ENCODE measurements at regions of chr1 and their contacts with region 1.

Region 1: DNA sequence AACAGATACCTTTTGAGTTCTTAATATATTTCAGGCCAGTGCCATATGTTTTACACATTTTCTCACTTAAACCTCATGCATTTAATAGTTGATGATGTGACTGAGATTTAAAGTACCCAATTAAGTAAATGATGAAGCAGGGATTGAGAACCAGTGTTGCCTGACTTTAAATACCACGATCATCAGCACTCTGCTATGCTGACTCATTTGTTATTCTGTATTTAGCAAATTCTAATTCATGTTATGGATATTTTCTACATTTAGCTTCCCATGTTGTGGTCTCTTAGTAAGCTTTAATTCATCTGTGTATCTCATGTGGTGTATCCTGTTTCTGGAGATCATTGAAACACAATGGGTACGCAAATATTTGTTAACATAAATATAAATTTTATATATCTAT is 363.0 kb downstream of the PTBP2 start:
- DNase-seq: no peak
- ATAC-seq: no peak
- H3K4me3 ChIP-seq: no peak overlapping the region
- H3K4me3 Mint-ChIP-seq: no peak overlapping the region
- H3K27ac ChIP-seq: no peak overlapping the region
- H3K27ac Mint-ChIP-seq: no peak overlapping the region
- H3K4me1 ChIP-seq: no peaks in the 10 kb centered on the region
- H3K4me1 Mint-ChIP-seq: no peaks in the 10 kb centered on the region
- H3K27me3 ChIP-seq: no peaks in the 10 kb centered on the region
- H3K27me3 Mint-ChIP-seq: no peaks in the 10 kb centered on the region

Region 2: GRCh38 chr1:96721416-96722160 is 363.0 kb before region 1 on chr1 and contains the start of gene PTBP2:
- CTCF ChIA-PET with region 1: no interaction called
- POLR2A ChIA-PET with region 1: interaction called in 1 of 2 experiments, 12 read pairs
- DNase-seq: peak; percentile 62 to 90 (median 79)
- ATAC-seq: peak; percentile 90 to 94 (median 94)
- H3K4me3 ChIP-seq: peak within 1 kb of the TSS; percentile 91 to 92
- H3K4me3 Mint-ChIP-seq: peak within 1 kb of the TSS; percentile 85 to 96 (median 92)
- H3K27ac ChIP-seq: peak within 1 kb of the TSS; percentile 88
- H3K27ac Mint-ChIP-seq: peak within 1 kb of the TSS; percentile 86 to 96
- H3K4me1 ChIP-seq: peaks cover 9 to 12% of the 10 kb centered on the region in 2 experiments
- H3K4me1 Mint-ChIP-seq: peaks cover 13 to 28% (median 25%) of the 10 kb centered on the region in 3 donors
- H3K27me3 ChIP-seq: no peaks in the 10 kb centered on the region
- H3K27me3 Mint-ChIP-seq: no peaks in the 10 kb centered on the region
- total RNA-seq, gene PTBP2: 16.8 to 24.0 (median 20.7) TPM

Region 3: DNA sequence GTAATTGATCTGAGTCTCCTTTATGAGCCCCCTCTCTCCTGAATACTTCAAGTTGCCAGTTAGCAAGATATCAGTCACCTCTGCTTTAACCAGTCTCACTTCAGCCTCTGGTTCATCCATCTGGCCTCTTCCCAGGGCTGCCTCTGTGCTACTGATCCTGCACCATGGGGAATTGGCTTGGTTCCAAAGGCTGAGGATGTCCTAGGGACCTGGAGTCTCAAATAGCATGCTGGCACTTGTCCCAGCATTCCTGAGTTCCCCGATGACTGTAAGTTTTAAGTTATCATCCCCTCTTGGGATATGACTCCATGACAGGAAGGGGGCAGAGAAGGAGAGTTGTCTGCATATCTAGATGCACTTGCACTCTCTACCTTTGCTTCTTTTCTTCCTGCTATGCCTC is 110.9 kb before region 1 on chr1:
- CTCF ChIA-PET with region 1: no interaction called
- POLR2A ChIA-PET with region 1: no interaction called
- DNase-seq: no peak
- ATAC-seq: no peak
- H3K4me3 ChIP-seq: no peak overlapping the region
- H3K4me3 Mint-ChIP-seq: no peak overlapping the region
- H3K27ac ChIP-seq: no peak overlapping the region
- H3K27ac Mint-ChIP-seq: no peak overlapping the region
- H3K4me1 ChIP-seq: no peaks in the 10 kb centered on the region
- H3K4me1 Mint-ChIP-seq: no peaks in the 10 kb centered on the region
- H3K27me3 ChIP-seq: peaks cover 0 to 1% of the 10 kb centered on the region in 2 experiments
- H3K27me3 Mint-ChIP-seq: peaks cover 22 to 30% of the 10 kb centered on the region in 2 donors

Region 4: GRCh38 chr1:97070376-97070775 is 14.2 kb before region 1 on chr1:
- CTCF ChIA-PET with region 1: no interaction called
- POLR2A ChIA-PET with region 1: no interaction called
- DNase-seq: no peak
- ATAC-seq: no peak
- H3K4me3 ChIP-seq: no peak overlapping the region
- H3K4me3 Mint-ChIP-seq: no peak overlapping the region
- H3K27ac ChIP-seq: no peak overlapping the region
- H3K27ac Mint-ChIP-seq: no peak overlapping the region
- H3K4me1 ChIP-seq: no peaks in the 10 kb centered on the region
- H3K4me1 Mint-ChIP-seq: no peaks in the 10 kb centered on the region
- H3K27me3 ChIP-seq: no peaks in the 10 kb centered on the region
- H3K27me3 Mint-ChIP-seq: no peaks in the 10 kb centered on the region

Measured in T-cell (primary cell).